Mucosa of descending colon (tissue), 3 donors: ENCODE measurements at regions of chr15 and their contacts with region 1.

Region 1: GRCh38 chr15:63048115-63048775 is 5.7 kb downstream of the TPM1 start:
- DNase-seq: peak; percentile 95 to 96 (median 96)
- ATAC-seq: peak; percentile 79
- H3K4me3 ChIP-seq: peak overlapping the region; percentile 72
- H3K4me1 ChIP-seq: peaks cover 49% of the 10 kb centered on the region
- CTCF ChIP-seq: peak; percentile 90

Region 2: DNA sequence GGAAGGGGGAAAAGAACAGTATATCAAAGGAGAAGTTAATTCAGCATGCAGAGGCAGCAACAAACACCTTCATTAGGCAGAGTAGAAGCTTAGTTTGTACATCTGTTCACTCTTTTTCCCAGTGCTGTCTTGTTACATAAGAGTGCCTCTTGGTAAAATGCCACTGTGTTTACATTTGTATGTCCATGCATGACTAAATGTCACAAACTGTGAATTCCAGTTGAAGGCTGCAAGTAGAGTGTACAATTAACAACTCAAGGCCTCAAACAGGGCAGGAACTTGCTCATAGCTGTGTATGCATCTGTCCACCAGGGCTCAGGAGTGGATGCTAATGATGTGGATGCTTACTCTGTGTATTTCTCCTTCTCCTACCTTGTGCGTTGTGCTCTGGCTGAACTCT is 219.9 kb before region 1 on chr15:
- intact Hi-C with region 1: no loop called
- DNase-seq: no peak
- ATAC-seq: peak; percentile 27
- H3K4me3 ChIP-seq: no peak overlapping the region
- H3K4me1 ChIP-seq: peaks cover 7% of the 10 kb centered on the region
- CTCF ChIP-seq: no peak

Region 3: GRCh38 chr15:62847900-62848489 is 200.2 kb before region 1 on chr15:
- intact Hi-C with region 1: loop called in 1 of 2 experiments (anchors 10 kb)
- DNase-seq: peak in 2 of 3 donors; percentile 83 to 91
- ATAC-seq: peak; percentile 83
- H3K4me3 ChIP-seq: no peak overlapping the region
- H3K4me1 ChIP-seq: peaks cover 10% of the 10 kb centered on the region
- CTCF ChIP-seq: peak; percentile 51

Region 4: GRCh38 chr15:62896978-62897647 is 151.1 kb before region 1 on chr15:
- intact Hi-C with region 1: loop called in 1 of 2 experiments (anchors 10 kb)
- DNase-seq: peak; percentile 75 to 84 (median 84)
- ATAC-seq: peak; percentile 81
- H3K4me3 ChIP-seq: no peak overlapping the region
- H3K4me1 ChIP-seq: peaks cover 14% of the 10 kb centered on the region
- CTCF ChIP-seq: no peak

Region 5: DNA sequence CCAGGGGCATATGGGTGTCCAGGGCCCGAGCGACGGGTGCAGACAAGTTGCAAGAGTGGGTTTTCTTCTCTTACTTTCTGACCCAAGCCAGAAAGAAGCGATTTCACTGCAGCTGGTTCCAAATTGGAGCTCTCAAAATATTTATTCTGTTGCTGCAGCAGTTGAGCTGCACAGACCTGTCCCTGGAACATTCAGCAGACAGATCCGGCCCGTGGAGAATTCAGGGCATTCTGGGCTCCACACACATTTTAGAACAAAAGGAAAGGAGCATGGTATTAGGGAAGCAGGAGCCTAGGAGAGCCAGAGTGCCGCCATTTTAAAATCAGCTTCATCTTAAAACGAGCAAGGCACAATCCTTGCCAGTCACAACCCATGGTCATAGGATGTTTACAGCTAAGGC is 141.0 kb before region 1 on chr15:
- intact Hi-C with region 1: no loop called
- DNase-seq: no peak
- ATAC-seq: no peak
- H3K4me3 ChIP-seq: no peak overlapping the region
- H3K4me1 ChIP-seq: no peaks in the 10 kb centered on the region
- CTCF ChIP-seq: no peak

Region 6: GRCh38 chr15:63093486-63094205 is 45.4 kb after region 1 on chr15:
- intact Hi-C with region 1: loop called in 1 of 2 experiments (anchors 5 kb)
- DNase-seq: peak; percentile 68 to 96 (median 85)
- ATAC-seq: peak; percentile 95
- H3K4me3 ChIP-seq: no peak overlapping the region
- H3K4me1 ChIP-seq: peaks cover 8% of the 10 kb centered on the region
- CTCF ChIP-seq: peak; percentile 64